ENCODE measurements at regions of chr16 and their contacts with region 1.

Region 1: DNA sequence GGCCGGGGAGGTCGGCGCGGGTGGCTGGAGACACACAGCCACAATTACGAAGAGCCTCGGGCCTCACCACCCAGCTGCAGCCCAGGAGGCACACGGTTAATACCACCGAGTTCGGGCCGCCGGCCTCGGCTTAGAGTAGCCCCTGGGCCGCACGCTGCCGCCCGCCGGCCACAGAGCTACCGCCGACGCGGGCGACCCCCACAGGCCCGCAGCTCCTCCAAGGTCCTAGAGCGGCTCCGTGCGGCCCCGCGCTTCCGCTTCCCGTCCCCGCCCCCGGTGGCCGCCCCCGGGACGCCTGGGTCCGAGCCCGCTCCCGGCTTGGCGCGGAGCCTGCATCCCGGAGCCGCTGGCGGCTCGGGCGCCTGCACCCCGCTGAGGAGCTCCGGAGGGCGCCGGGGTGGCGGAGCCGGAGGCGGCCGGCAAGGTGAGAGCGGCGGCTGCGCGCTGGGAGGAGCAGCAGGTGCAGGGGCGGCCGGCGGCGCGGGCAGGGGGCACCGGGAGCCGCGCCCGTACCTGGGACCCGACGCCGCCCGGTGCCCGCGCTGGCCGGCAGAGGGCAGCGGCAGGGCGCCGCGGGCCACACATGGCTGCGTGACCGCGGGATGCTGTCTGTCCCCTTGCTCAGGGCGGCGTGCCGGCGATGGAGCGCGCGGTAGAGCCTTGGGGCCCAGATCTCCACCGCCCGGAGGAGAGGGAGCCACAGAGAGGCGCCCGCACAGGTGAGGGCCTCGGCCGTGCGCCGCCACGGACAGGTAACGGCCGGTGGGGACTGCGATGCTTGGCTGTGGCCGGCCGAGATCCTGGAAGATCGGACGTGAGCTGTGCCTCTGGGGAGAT is at the start of gene ZNF48:
- DNase-seq: peak; percentile 94
- H3K4me3 ChIP-seq: peak within 1 kb of the TSS; percentile 88 to 94
- H3K27ac ChIP-seq: peak within 1 kb of the TSS; percentile 83 to 96
- H3K4me1 ChIP-seq: peaks cover 10 to 18% of the 10 kb centered on the region in 2 experiments; a peak in 2 of 4 replicates
- H3K27me3 ChIP-seq: no peaks in the 10 kb centered on the region
- CTCF ChIP-seq: peak; percentile 22; the same call in 1 of the 2 replicates
- EP300 ChIP-seq: peak; percentile 36 to 45; a peak in 1 of 4 replicates
- RAD21 ChIP-seq: no peak; the same call in 1 of the 2 replicates
- polyA plus RNA-seq, gene ZNF48: 7.9 and 8.8 TPM in 2 replicates

Region 2: GRCh38 chr16:30370444-30371247 is 24.7 kb before region 1 on chr16 and contains the start of gene TBC1D10B:
- CTCF ChIA-PET with region 1: interaction called, 7 read pairs
- POLR2A ChIA-PET with region 1: interaction called, 13 read pairs
- DNase-seq: peak; percentile 93
- H3K4me3 ChIP-seq: peak within 1 kb of the TSS; percentile 74 to 87
- H3K27ac ChIP-seq: peak within 1 kb of the TSS; percentile 57 to 91; a peak in 3 of 4 replicates
- H3K4me1 ChIP-seq: peaks cover 4 to 37% of the 10 kb centered on the region in 2 experiments; a peak in 3 of 4 replicates
- H3K27me3 ChIP-seq: no peaks in the 10 kb centered on the region
- CTCF ChIP-seq: peak; percentile 27; the same call in 1 of the 2 replicates
- EP300 ChIP-seq: no peak
- RAD21 ChIP-seq: 0 out of 2 replicates have a peak, but pooled peaks have one; percentile 22
- polyA plus RNA-seq, gene TBC1D10B: 15.7 and 20.5 TPM in 2 replicates

Region 3: GRCh38 chr16:30378236-30379204 is 16.9 kb before region 1 on chr16:
- CTCF ChIA-PET with region 1: interaction called, 15 read pairs
- POLR2A ChIA-PET with region 1: interaction called, 33 read pairs
- DNase-seq: peak; percentile 98
- H3K4me3 ChIP-seq: peak overlapping the region; percentile 70 to 96
- H3K27ac ChIP-seq: peak overlapping the region; percentile 98 to 99
- H3K4me1 ChIP-seq: peaks cover 6 to 9% of the 10 kb centered on the region in 2 experiments; a peak in 3 of 4 replicates
- H3K27me3 ChIP-seq: no peaks in the 10 kb centered on the region
- CTCF ChIP-seq: peak; percentile 35
- EP300 ChIP-seq: peak in 1 of 2 experiments; percentile 18; a peak in 1 of 4 replicates
- RAD21 ChIP-seq: no peak

Region 4: DNA sequence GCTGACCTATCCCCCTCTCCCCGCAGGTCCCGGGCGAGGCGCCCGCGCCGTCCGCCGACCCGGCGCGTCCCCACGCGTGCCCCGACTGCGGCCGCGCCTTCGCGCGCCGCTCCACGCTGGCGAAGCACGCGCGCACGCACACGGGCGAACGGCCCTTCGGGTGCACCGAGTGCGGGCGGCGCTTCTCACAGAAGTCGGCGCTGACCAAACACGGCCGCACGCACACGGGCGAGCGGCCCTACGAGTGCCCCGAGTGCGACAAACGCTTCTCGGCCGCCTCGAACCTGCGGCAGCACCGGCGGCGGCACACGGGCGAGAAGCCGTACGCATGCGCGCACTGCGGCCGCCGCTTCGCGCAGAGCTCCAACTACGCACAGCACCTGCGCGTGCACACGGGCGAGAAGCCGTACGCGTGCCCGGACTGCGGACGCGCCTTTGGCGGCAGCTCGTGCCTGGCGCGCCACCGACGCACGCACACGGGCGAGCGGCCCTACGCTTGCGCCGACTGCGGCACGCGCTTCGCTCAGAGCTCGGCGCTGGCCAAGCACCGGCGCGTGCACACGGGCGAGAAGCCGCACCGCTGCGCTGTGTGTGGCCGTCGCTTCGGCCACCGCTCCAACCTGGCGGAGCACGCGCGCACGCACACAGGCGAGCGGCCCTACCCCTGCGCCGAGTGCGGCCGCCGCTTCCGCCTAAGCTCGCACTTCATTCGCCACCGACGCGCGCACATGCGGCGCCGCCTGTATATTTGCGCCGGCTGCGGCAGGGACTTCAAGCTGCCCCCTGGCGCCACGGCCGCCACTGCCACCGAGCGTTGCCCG is 22.4 kb after region 1 on chr16:
- CTCF ChIA-PET with region 1: interaction called, 4 read pairs
- POLR2A ChIA-PET with region 1: interaction called, 11 read pairs
- DNase-seq: peak; percentile 93
- H3K4me3 ChIP-seq: peak overlapping the region; percentile 12 to 40; a peak in 3 of 4 replicates
- H3K27ac ChIP-seq: peak overlapping the region in 1 of 2 experiments; percentile 50; a peak in 2 of 4 replicates
- H3K4me1 ChIP-seq: peaks cover 0 to 13% of the 10 kb centered on the region in 2 experiments; a peak in 1 of 4 replicates
- H3K27me3 ChIP-seq: no peaks in the 10 kb centered on the region
- CTCF ChIP-seq: no peak
- EP300 ChIP-seq: no peak
- RAD21 ChIP-seq: no peak; the same call in 1 of the 2 replicates

Region 5: GRCh38 chr16:30458561-30459394 is 63.4 kb after region 1 on chr16:
- CTCF ChIA-PET with region 1: no interaction called
- POLR2A ChIA-PET with region 1: no interaction called
- DNase-seq: no peak
- H3K4me3 ChIP-seq: no peak overlapping the region
- H3K27ac ChIP-seq: no peak overlapping the region
- H3K4me1 ChIP-seq: no peaks in the 10 kb centered on the region
- H3K27me3 ChIP-seq: no peaks in the 10 kb centered on the region
- CTCF ChIP-seq: no peak
- EP300 ChIP-seq: no peak
- RAD21 ChIP-seq: no peak

Region 6: DNA sequence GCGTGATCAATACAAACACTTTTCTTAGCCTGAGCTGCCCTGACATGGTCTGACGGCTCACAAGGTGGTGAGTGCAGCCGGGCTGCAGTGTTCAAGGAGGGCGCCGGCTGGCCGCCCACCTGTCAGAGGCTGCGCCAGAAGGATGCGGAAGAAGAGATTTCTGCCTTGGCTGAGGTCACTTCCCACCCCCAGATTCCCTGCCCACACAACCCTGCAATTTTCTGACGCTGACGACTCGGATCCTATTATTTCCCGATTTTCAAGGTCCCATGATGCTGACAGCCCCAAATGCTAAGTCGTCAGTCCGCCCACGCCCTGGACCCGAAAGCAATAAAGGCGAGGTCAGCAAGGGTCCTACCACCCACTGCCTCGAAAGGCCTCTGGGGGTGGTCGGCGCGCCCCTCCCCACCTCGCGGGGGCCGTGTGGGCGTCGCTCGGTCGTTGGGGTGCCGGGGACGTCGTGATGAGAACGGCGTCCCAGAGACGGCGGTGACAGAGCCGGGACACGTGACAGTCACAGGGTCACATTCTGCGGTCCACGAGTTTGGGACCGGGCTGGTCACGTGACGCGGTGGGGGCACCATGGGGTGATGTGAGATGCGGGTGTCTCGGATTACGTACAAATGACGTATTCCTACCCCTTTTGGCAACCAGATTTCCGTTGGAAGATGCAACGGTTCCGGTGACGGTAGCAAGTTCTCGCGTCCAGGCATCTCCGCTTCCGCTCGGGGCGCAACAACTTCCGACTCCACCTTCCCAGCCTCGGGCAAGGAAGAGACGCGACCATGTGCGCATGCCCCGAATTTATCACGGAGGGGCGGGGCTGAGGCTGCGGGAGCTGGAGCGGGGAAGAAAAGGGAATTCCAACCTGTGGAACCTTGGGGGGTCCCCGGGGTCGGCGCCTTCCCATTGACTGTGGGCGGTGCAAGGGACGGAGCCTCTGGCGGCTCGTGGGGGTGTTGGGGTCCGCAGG is 637.6 kb after region 1 on chr16 and contains the start of gene STX4:
- CTCF ChIA-PET with region 1: no interaction called
- POLR2A ChIA-PET with region 1: no interaction called
- DNase-seq: peak; percentile 94
- H3K4me3 ChIP-seq: peak within 1 kb of the TSS; percentile 87 to 97
- H3K27ac ChIP-seq: peak within 1 kb of the TSS; percentile 64
- H3K4me1 ChIP-seq: peaks cover 9 to 10% of the 10 kb centered on the region in 2 experiments; a peak in 2 of 4 replicates
- H3K27me3 ChIP-seq: no peaks in the 10 kb centered on the region
- CTCF ChIP-seq: no peak
- EP300 ChIP-seq: no peak
- RAD21 ChIP-seq: no peak
- polyA plus RNA-seq, gene STX4: 117 TPM in 2 replicates

Measured in SK-N-SH (cell line).